PC-9 (cell line): ENCODE measurements at regions of chr1 and their contacts with region 1.

Region 1: DNA sequence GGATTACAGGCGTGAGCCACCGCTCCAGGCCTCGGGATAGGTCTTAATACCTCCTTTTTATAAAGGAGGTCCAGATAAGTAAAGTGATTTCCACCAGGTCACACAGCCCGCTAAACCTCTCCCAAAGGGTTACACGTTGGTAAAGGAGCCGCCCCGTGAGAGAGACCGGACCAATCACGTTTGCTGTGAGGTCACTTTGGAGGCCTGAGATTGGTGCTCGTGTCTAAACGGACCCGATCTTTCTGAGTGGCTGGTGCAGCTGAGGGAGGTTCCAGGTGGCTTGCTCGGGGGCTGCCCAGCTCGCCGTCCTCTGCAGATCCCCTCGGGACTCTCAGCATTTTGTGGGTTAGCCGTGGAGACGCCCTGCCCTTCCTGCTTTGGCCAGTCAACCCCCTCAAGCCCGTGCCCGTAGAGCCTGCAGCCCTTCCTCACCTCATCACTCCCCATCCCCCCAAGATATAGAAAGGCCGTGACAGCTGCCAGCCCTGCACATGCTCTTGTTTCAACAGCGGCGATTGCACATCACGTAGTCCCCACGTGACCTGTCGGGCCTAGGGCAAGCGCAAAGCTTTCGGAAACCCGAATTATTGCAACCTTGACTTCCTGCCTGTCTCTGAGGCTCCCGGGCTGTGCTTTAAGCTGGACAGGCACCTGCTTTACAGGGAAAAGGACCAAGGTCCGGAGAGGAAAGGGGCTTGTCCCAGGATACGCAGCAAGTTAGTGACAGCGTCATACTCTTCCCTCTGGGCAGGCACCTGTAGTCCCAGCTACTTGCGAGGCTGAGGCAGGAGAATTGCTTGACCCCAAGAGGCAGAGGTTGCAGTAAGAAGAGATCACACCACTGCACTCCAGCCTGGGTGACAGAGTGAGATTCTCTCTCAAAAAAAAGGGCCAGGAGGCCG is 5.0 kb upstream of the COA7 start:
- DNase-seq: peak; percentile 46 to 72
- H3K4me3 ChIP-seq: peak overlapping the region; percentile 46; the same call in 1 of the 2 replicates
- H3K27ac ChIP-seq: no peak overlapping the region
- H3K4me1 ChIP-seq: peaks cover 30% of the 10 kb centered on the region
- H3K27me3 ChIP-seq: no peaks in the 10 kb centered on the region
- CTCF ChIP-seq: no peak

Region 2: DNA sequence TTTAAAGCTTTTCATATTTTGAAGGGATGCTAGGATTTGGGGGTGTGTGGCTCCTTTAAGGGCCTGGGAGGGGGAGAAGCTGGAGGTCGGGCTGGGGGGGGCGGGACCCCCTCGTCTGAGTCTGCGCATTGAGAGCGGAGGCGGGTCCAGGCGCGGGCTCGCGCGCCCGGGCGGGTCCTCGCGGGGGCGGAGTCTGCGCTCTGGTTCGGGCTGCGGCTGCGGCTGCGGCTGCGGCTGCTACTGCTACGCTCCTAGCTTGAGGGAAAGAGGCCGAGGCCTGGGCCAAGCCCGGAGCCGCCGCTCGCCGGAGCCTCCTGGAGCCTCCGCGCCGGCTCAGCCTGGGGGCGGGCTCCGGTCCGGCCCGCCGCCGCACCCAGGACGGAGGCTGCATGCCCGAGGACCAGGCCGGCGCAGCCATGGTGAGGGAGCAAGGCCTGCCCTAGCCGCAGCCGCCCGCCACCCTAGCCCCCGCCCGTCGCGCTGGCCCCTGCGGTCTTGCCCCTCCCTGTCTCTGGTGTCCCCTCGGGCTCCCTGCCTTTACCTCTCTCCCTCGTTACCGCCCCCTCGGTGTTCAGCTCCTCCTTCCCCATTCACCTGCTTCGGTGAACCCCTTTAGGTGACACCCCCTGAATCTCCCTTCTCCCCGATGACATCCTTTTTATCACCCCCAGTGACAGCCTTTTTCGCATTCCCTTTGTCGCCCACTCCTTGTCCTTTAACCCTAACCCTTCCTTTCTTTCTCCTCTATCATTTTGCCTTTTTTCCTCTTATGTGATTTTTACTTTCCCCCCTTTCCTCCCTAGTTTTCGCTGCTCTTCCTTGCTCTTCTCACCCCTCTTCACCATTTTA is 23.4 kb after region 1 on chr1 and contains the start of gene ZYG11B:
- CTCF ChIA-PET with region 1: no interaction called
- POLR2A ChIA-PET with region 1: no interaction called
- intact Hi-C with region 1: no loop called
- DNase-seq: peak; percentile 63 to 91
- H3K4me3 ChIP-seq: peak within 1 kb of the TSS; percentile 87
- H3K27ac ChIP-seq: no peak within 1 kb of the TSS
- H3K4me1 ChIP-seq: peaks cover 13% of the 10 kb centered on the region
- H3K27me3 ChIP-seq: no peaks in the 10 kb centered on the region
- CTCF ChIP-seq: no peak
- total RNA-seq, gene ZYG11B: 18.6 and 21.4 TPM in 2 replicates

Region 3: DNA sequence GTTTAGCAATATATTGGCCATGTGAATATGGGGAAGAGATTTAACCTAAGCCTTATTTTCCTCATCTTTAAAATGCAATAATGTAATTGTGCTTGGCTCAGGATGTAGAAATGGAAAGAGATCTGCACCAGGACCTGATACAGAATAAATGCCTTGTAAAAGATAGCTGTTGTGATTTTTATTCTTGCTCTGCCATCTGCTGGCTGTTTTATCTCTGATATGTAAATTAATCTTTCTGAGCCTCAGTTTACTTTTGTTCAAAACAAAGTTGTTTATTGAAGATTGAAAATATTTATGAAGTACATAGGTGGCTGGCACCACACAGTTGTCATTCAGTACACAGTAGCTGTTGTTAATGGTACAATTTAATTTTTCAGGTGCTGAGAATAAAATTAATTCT is 45.0 kb after region 1 on chr1:
- CTCF ChIA-PET with region 1: no interaction called
- POLR2A ChIA-PET with region 1: interaction called, 3 read pairs
- intact Hi-C with region 1: loop called (anchors 2 kb)
- DNase-seq: no peak
- H3K4me3 ChIP-seq: no peak overlapping the region
- H3K27ac ChIP-seq: no peak overlapping the region
- H3K4me1 ChIP-seq: peaks cover 8% of the 10 kb centered on the region
- H3K27me3 ChIP-seq: no peaks in the 10 kb centered on the region
- CTCF ChIP-seq: peak; percentile 46; the same call in 1 of the 2 replicates

Region 4: DNA sequence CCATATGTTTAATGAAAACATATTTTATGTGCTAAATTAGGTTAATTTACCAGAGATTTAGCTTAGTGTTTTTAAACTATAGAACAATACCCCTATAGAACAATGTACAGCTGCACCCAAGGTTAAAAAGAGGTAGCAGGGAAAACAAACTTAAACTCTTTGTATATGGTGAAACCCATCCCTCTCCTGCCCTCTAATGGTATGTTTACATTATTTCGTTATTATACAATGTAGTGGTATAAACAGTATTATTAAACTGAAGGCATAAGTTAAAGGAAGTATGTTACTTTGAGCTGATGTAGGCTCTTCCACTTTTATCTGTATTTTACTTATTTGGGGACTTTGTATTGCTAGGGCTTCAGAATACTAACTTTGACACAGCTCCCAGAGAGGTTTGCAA is 122.7 kb after region 1 on chr1:
- CTCF ChIA-PET with region 1: no interaction called
- POLR2A ChIA-PET with region 1: no interaction called
- intact Hi-C with region 1: loop called (anchors 5 kb)
- DNase-seq: no peak
- H3K4me3 ChIP-seq: no peak overlapping the region
- H3K27ac ChIP-seq: no peak overlapping the region
- H3K4me1 ChIP-seq: no peaks in the 10 kb centered on the region
- H3K27me3 ChIP-seq: no peaks in the 10 kb centered on the region
- CTCF ChIP-seq: peak; percentile 55

Region 5: DNA sequence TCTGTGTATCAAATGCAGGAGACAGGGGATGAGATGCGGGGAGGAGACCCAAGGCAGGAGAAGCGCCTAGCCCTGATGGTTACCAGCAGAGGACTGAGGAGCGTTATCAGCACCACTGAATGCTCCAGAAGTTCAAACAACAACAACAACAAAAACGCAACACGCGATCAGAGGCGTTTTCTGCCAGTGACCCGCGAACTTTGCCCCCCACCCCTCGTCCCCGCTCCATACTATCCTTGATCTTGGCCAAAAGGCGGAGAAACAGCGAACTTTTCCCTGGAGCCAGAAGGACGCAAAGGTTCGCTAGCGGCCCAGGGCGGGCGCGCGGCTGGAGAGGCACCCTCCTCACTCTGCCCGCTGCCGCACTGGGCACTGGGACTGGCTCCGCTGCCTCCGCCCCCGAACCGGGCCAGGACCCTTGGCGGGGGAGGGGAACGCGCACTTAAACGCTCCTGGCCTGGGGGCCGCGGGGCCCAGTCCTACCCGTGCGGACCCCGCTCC is 217.7 kb after region 1 on chr1:
- CTCF ChIA-PET with region 1: no interaction called
- POLR2A ChIA-PET with region 1: no interaction called
- intact Hi-C with region 1: loop called (anchors 5 kb)
- DNase-seq: no peak
- H3K4me3 ChIP-seq: no peak overlapping the region
- H3K27ac ChIP-seq: no peak overlapping the region
- H3K4me1 ChIP-seq: no peaks in the 10 kb centered on the region; the same call in 1 of the 2 replicates
- H3K27me3 ChIP-seq: no peaks in the 10 kb centered on the region
- CTCF ChIP-seq: no peak

Region 6: DNA sequence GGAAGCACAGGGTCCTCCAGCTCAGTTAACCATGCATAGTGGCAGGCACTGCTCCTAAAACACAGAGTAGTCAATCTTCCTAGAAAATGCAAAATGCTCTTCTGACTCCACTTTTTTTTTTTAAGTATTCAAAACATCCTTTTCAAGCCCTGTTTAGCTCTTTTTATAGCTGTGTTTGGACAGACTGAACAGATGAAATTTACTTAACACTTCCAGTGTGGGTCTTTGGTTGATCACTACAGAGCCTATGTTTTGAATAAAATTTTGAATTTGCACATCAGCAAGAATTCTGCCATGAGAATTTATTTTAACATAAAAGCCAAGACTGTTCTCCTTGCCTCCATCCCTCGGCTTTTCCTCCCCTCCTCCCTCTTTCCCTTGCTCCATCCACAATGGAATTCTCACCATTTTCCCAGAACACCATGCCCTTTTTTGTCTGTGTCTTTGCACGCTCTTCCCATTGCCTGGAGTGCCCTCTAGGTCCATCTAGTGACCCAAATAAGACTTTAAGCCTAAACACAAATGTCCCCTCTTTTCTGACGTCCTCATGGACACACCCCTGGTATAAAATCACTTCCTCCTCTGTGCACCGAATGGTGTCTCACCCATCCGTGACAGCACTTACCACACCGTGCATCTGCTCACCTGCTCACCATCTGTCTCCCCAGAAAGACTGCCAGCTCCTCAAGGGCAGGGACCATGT is 469.4 kb after region 1 on chr1:
- CTCF ChIA-PET with region 1: no interaction called
- POLR2A ChIA-PET with region 1: no interaction called
- intact Hi-C with region 1: loop called (anchors 2 kb)
- DNase-seq: no peak
- H3K4me3 ChIP-seq: no peak overlapping the region
- H3K27ac ChIP-seq: no peak overlapping the region
- H3K4me1 ChIP-seq: 0 out of 2 replicates have a peak, but pooled peaks cover 5% of the 10 kb centered on the region
- H3K27me3 ChIP-seq: no peaks in the 10 kb centered on the region
- CTCF ChIP-seq: peak; percentile 20; the same call in 1 of the 2 replicates

Region 7: GRCh38 chr1:53182111-53182593 is 479.0 kb after region 1 on chr1:
- CTCF ChIA-PET with region 1: no interaction called
- POLR2A ChIA-PET with region 1: no interaction called
- intact Hi-C with region 1: loop called (anchors 1 kb)
- DNase-seq: peak; percentile 63 to 79
- H3K4me3 ChIP-seq: no peak overlapping the region
- H3K27ac ChIP-seq: no peak overlapping the region
- H3K4me1 ChIP-seq: peaks cover 3% of the 10 kb centered on the region; the same call in 1 of the 2 replicates
- H3K27me3 ChIP-seq: no peaks in the 10 kb centered on the region
- CTCF ChIP-seq: peak; percentile 93

Region 8: GRCh38 chr1:53238197-53239155 is 535.3 kb after region 1 on chr1 and contains the start of gene MAGOH:
- CTCF ChIA-PET with region 1: no interaction called
- POLR2A ChIA-PET with region 1: no interaction called
- intact Hi-C with region 1: loop called (anchors 5 kb)
- DNase-seq: peak; percentile 92 to 94
- H3K4me3 ChIP-seq: peak within 1 kb of the TSS; percentile 76
- H3K27ac ChIP-seq: peak within 1 kb of the TSS; percentile 71
- H3K4me1 ChIP-seq: peaks cover 27% of the 10 kb centered on the region
- H3K27me3 ChIP-seq: no peaks in the 10 kb centered on the region
- CTCF ChIP-seq: no peak
- total RNA-seq, gene MAGOH: 48.0 and 75.7 TPM in 2 replicates